RWPE1 (cell line): ENCODE measurements at regions of chr15 and their contacts with region 1.

Region 1: DNA sequence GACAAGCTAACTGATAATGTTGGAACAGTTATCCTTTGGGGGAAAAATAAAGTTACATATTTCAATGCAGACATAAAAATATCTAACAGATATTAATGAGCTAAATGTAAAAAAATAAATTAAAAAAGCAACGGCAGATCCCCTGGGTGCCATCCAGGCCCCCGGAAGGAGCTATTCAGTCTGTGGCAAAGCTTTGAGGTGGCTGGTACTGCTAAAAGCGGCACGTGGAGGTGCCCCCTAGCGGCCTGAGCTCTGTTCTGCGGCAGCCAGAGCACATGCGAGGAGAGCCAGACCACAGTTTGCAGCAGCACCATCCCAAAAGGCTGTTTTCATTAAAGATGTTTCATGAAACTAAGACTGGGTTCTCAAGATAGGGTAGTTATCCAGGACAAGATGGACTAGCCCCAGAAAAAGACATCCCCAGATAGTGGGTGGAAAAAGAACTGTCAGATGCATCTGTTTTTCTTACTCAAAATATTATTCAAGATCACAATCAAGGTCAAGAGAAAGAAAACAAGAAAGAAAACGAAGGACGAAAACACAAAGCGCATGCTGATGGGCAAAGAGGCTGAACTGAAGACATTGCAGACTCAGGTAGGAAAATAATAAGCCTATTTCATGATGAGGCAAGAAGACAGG is 18.7 kb downstream of the AP3S2 start:
- DNase-seq: peak; percentile 73
- H3K27ac ChIP-seq: no peak overlapping the region
- CTCF ChIP-seq: peak; percentile 99

Region 2: GRCh38 chr15:89740137-89740536 is 134.9 kb before region 1 on chr15:
- CTCF ChIA-PET with region 1: interaction called, 11 read pairs
- POLR2A ChIA-PET with region 1: no interaction called
- DNase-seq: peak; percentile 80
- H3K27ac ChIP-seq: no peak overlapping the region
- CTCF ChIP-seq: peak; percentile 98

Region 3: DNA sequence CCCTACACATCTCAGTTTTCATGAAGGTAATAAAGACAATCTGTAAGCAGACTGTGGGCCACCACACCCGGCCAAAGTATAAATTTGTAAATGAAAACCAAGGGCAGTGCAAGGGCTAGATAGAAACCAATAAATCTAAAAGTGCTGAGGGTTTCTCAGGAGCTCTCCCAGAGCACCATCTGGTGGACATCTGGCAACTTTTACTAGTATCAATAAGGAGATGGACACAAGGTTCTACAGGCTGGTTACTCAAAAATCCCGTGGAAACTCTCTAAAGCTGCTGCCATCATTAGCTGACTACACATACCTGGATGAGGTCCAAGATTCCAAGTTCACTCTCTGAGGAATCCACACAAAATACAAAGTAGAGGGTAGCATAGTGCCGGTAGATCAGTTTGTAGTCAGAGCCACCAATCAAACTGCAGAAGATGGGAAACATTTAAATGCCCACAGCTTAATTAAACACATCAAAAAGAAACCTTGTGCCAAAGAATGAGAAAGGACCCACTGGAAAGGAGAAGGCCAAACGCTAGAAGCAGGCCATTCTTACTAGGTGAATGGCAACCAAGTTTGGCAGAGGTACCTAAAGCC is 13.3 kb after region 1 on chr15:
- CTCF ChIA-PET with region 1: interaction called, 18 read pairs
- POLR2A ChIA-PET with region 1: no interaction called
- DNase-seq: peak; percentile 30
- H3K27ac ChIP-seq: no peak overlapping the region
- CTCF ChIP-seq: peak; percentile 45